Right ventricle myocardium superior (tissue), 1 donor: ENCODE measurements at regions of chr15 and their contacts with region 1.

Region 1: GRCh38 chr15:90482124-90483011 is 47.4 kb upstream of the CRTC3 start:
- DNase-seq: no peak
- ATAC-seq: peak; percentile 75

Region 2: DNA sequence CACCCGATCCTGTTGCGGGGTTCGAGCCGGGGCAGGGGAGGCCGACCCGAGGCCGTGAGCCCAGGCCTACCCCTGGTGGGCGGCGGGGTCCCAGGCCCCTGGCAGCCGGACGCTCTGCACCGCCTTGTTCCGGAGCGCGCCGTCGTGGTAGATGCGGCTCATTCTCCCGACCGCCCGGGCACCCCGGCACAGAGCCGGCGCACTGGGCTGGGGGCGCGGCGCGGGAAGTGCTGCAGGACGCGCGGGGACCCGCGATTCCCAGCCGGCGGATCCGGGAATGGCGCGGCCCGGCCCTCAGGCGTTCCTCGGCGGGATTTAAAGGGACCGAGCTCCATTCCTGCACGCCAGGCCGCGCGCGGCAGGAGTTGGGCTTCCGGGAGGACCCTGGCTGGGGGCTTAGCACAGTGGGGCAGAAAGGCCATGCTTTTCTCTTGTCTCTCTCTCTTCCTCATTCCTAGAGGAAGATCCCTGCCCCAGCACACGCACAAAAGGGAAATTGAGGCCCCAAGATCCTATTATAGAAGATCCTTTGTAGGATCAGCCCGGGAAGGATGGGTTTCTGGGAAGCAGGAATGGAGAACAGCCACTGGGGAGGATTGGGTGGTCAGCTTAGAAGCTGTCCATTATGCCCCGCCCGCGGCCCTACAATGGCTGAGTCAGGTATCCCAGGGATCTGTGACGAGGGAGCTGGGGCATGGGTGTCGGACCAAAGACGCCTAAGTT is 569.5 kb before region 1 on chr15 and contains the start of gene ARPIN:
- intact Hi-C with region 1: no loop called
- DNase-seq: peak; percentile 73
- ATAC-seq: peak; percentile 94
- total RNA-seq, gene ARPIN: 10.6 TPM

Region 3: GRCh38 chr15:90362936-90363212 is 119.5 kb before region 1 on chr15:
- intact Hi-C with region 1: loop called (anchors 5 kb)
- DNase-seq: no peak
- ATAC-seq: peak; percentile 65

Region 4: GRCh38 chr15:90375071-90375470 is 107.3 kb before region 1 on chr15:
- intact Hi-C with region 1: no loop called
- DNase-seq: no peak
- ATAC-seq: no peak

Region 5: DNA sequence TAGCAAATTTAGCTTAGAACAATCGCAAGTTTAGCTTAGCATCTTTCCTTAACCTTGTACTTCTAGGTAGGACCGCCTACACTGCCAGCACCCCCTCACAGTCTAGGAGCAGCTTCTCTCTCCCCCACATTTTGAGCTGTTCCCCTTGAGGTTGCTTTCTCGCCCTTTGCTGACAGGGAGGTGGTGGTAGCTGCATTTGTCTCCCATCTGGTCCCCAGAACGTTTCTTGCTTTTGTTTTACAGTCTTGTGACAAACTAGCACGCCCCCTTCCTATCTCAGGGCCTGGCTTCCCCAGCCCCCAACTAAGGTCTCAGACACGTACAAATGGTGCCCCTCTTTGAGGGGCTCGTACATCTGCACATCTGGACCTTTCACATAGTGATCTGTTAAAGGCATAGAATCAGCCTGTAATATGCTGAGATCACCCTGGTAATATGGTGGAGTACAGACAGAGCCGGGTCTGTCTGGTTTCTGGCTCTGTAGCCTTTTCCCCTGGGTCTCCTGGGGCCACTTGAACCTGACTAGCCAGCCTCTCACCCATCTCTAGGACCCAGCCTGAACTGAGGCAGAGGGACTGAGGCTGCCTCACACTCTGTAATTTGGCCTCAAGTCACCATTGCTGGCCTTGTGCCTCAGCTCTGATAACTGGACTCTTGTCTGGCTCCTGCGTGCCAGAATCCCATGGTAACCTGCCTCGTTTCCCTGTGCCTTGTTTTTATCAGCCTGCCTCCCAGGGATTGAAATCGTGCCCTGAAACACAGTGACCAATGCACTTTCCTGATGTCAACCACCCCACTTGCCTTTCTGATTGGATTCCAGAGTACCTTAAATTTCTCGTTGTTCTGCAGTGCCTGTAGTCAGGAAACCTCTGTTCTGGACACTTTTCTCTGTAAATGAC is 75.1 kb after region 1 on chr15:
- intact Hi-C with region 1: no loop called
- DNase-seq: peak; percentile 93
- ATAC-seq: peak; percentile 82

Region 6: DNA sequence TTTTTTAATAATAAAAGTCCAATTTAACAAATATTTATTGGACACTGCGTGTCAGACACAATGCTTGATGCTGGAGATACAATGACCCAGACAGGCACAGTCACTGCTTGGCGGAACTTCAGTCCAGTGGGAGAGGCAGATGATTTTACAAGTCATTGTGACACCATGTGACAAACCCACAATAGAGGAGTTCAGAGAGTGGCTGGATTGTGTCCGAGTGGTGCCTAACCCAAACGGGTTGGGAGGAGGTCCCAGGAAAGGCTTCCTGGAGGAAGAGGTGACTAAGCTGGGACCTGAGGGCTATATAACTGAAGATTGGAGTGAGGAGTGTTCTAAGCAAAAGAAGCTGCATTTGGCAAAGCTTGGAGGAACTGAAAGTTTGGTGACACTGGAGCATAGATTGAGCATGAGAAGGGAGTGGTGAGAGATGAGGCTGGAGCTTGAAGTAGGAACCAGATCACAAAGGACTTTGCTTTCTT is 88.7 kb after region 1 on chr15:
- intact Hi-C with region 1: no loop called
- DNase-seq: peak; percentile 56
- ATAC-seq: peak; percentile 81